Panc1 (cell line): ENCODE measurements at regions of chr1 and their contacts with region 1.

Region 1: DNA sequence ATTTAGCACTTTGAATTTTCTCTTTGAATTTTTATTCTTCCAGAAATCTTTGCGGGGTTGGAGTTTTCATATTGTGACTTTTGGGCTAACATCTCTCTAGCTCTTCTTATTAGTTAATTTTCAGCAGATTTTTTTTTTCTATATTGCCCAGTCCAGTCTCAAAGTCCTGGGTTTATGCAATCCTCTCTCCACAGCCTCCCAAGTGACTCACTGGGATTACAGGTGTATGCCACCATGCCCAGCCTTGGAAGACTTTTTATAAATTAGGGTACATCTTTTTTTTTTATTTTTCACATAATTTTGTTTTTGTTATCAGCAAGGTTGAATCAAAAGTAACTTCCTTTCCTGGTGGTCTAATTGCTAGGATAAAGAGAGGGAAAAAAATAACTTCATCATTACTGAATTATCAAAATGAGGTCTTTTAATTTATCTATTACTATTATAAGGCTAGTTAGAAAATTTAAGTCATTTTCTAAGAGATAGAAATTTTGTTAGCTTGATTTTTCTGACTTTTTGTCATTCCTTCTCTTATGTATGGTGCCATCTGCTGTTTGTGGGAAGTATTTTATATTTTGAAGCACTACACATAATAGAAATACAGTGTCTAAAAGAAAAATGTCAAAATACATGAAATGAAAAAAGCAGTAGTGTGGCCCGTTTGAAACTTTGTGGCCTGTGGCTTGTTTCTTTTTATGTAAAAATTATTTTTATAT is 273.4 kb upstream of the CACYBP start:
- DNase-seq: no peak
- ATAC-seq: no peak
- H3K4me3 ChIP-seq: no peak overlapping the region
- H3K27ac ChIP-seq: no peak overlapping the region
- H3K4me1 ChIP-seq: no peaks in the 10 kb centered on the region
- H3K27me3 ChIP-seq: no peaks in the 10 kb centered on the region
- CTCF ChIP-seq: peak; percentile 65; the same call in 1 of the 2 replicates

Region 2: GRCh38 chr1:174262349-174263241 is 463.7 kb before region 1 on chr1:
- CTCF ChIA-PET with region 1: interaction called, 7 read pairs
- POLR2A ChIA-PET with region 1: no interaction called
- in situ Hi-C with region 1: no loop called
- intact Hi-C with region 1: loop called (anchors 1 kb)
- DNase-seq: peak; percentile 35
- ATAC-seq: peak; percentile 81
- H3K4me3 ChIP-seq: no peak overlapping the region
- H3K27ac ChIP-seq: no peak overlapping the region
- H3K4me1 ChIP-seq: no peaks in the 10 kb centered on the region
- H3K27me3 ChIP-seq: no peaks in the 10 kb centered on the region
- CTCF ChIP-seq: peak; percentile 84